Uterus (tissue), 4 donors: ENCODE measurements at regions of chr6 and their contacts with region 1.

Region 1: GRCh38 chr6:159693128-159693893 is at the start of gene SOD2:
- DNase-seq: peak; percentile 79 to 84
- H3K4me3 ChIP-seq: peak within 1 kb of the TSS; percentile 55 to 80
- H3K27ac ChIP-seq: peak within 1 kb of the TSS; percentile 95 to 97
- H3K4me1 ChIP-seq: peaks cover 5 to 6% of the 10 kb centered on the region in 2 donors
- H3K27me3 ChIP-seq: no peaks in the 10 kb centered on the region
- CTCF ChIP-seq: no peak
- POLR2A ChIP-seq: peak; percentile 84 to 85
- total RNA-seq, gene SOD2: 34.1 to 305 (median 208) TPM

Region 2: DNA sequence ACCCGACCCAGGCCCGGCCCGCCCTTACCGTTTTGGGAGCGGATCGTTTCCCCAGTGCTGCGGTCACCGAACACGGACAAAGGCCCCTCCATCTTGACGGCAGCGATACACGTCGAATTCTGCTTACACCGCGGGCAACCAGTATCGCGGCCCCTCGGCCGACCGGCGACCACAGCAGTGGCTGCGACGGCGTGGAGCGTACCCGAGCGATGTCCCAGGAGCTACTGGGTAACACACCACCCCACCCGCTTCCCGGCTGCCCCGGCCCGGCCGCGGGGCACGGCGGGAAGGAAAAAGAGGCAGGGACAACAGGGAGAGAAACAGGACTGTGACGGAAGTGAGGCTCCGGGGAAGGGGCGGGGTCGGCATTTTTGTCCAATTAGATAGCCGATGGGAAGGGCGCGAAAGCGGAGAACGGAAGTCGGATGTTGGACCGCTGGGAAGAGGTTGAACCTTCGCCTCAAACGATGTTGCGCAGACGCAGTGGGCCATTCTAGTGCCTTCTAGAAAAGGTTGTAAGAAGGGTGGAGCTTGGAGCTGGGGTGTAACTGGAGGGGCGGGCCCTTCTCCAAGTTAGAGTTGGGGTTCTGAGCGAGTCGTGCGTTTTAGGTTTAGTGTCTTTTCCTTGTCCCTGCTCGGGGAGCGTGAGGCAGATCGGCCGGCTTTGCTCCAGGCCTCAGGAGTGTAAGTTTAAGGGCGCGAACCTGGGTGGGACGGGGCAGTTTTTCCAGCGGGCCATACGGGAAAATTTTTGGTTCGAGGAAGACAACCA is 96.3 kb after region 1 on chr6 and contains the start of gene TCP1:
- intact Hi-C with region 1: loop called (anchors 5 kb)
- DNase-seq: peak; percentile 99 to 100
- H3K4me3 ChIP-seq: peak within 1 kb of the TSS; percentile 92 to 99
- H3K27ac ChIP-seq: peak within 1 kb of the TSS; percentile 92 to 100
- H3K4me1 ChIP-seq: peaks cover 21 to 23% of the 10 kb centered on the region in 2 donors
- H3K27me3 ChIP-seq: no peaks in the 10 kb centered on the region
- CTCF ChIP-seq: peak in 1 of 4 experiments; percentile 22
- POLR2A ChIP-seq: peak; percentile 96
- total RNA-seq, gene TCP1: 109 to 241 (median 170) TPM

Region 3: GRCh38 chr6:159819932-159820640 is 126.8 kb after region 1 on chr6:
- intact Hi-C with region 1: no loop called
- DNase-seq: no peak
- H3K4me3 ChIP-seq: no peak overlapping the region
- H3K27ac ChIP-seq: no peak overlapping the region
- H3K4me1 ChIP-seq: no peaks in the 10 kb centered on the region
- H3K27me3 ChIP-seq: no peaks in the 10 kb centered on the region
- CTCF ChIP-seq: no peak
- POLR2A ChIP-seq: no peak